Activated T-helper 1 cell treated with anti-CD3 and anti-CD28 coated beads, Interleukin-12 subunit alpha, Interleukin-12 subunit beta, Interleukin-2, Interleukin-4 antibody, amounts not matched to agents 30 ng/mL and 10 ng/mL and 1 ng/mL, durations not matched to agents 14 hours and 24 hours and 36 hours (primary cell): ENCODE measurements at regions of chr5 and their contacts with region 1.

Region 1: DNA sequence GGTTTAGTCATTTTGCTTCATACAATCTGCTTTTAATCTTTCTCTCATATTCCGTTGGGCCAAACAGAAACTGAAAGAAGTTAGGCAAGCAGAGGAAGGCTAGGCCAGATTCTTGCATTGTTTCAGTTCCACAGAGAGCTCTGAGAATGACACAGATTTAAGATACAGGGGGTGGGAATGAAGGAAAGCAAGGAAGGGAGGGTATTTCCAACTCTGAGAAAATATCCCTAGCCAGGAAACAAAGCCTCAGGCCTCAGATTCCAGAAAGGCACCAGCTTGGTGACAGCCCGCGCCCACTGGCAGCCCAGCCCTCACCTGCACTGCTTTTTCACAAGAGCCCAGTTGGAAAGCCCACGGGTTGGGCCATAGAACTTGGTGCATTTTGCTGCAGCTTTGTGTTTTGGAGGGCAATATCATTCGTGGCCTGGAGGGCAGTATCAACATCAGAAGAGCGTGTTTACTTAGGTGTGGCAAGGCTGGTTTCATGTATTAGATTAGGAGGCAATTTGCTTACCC is 63.5 kb downstream of the ENC1 start:
- DNase-seq: peak; percentile 12
- H3K4me3 Mint-ChIP-seq: peak overlapping the region; percentile 21
- H3K27ac Mint-ChIP-seq: peak overlapping the region; percentile 53
- H3K4me1 Mint-ChIP-seq: peaks cover 34% of the 10 kb centered on the region
- H3K27me3 Mint-ChIP-seq: peaks cover 12% of the 10 kb centered on the region

Region 2: GRCh38 chr5:73160239-73160671 is 1416.7 kb before region 1 on chr5:
- intact Hi-C with region 1: loop called (anchors 5 kb)
- DNase-seq: peak; percentile 38
- H3K4me3 Mint-ChIP-seq: no peak overlapping the region
- H3K27ac Mint-ChIP-seq: peak overlapping the region; percentile 64
- H3K4me1 Mint-ChIP-seq: peaks cover 24% of the 10 kb centered on the region
- H3K27me3 Mint-ChIP-seq: peaks cover 76% of the 10 kb centered on the region

Region 3: GRCh38 chr5:73902327-73903051 is 674.5 kb before region 1 on chr5:
- intact Hi-C with region 1: loop called (anchors 2 kb)
- DNase-seq: no peak
- H3K4me3 Mint-ChIP-seq: no peak overlapping the region
- H3K27ac Mint-ChIP-seq: no peak overlapping the region
- H3K4me1 Mint-ChIP-seq: peaks cover 14% of the 10 kb centered on the region
- H3K27me3 Mint-ChIP-seq: peaks cover 38% of the 10 kb centered on the region

Region 4: DNA sequence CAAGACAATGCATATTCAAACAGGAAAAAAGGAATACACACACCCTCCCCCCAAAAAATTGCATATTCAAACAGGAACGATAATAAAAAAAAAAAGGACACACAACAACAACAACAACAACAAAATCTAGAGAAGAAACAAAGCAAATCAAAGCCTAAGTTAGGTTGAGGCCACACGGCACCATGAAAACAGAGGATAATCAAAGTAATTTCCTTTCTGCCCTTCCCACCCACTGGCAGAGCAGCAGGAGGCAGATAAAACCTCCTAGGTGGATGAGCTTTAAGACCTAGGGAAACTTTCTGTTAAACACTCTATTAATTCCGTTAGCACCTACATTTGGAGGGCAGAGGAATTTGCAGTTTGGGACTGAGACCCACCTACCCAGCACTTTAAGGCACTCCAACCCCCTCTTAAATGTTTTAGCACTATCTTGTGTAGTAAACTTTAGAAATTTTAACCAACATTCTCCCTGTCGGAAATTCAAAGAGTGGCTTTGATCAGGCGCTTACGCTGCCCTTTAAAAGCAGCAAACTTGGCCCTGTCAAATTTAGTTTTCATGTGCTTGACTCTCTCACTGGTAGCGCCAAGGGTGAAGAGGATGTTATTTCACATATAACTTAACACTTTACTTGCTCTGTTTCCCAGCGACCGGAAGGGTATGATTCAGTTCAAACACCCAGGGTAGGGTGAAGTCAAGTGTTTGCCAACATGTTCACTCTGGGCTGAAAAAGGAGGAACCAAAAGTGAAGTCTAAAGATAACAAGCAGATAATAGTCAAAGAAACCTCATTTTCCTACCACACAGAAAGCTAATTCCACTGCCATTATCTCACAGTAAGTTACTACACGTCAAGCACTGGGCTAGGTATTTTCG is 54.3 kb after region 1 on chr5:
- intact Hi-C with region 1: loop called (anchors 1 kb)
- DNase-seq: peak; percentile 21
- H3K4me3 Mint-ChIP-seq: no peak overlapping the region
- H3K27ac Mint-ChIP-seq: peak overlapping the region; percentile 79
- H3K4me1 Mint-ChIP-seq: peaks cover 27% of the 10 kb centered on the region
- H3K27me3 Mint-ChIP-seq: no peaks in the 10 kb centered on the region

Region 5: GRCh38 chr5:74684900-74685851 is 108.2 kb after region 1 on chr5 and contains the start of gene HEXB:
- intact Hi-C with region 1: loop called (anchors 1 kb)
- DNase-seq: peak; percentile 83
- H3K4me3 Mint-ChIP-seq: peak within 1 kb of the TSS; percentile 90
- H3K27ac Mint-ChIP-seq: peak within 1 kb of the TSS; percentile 71
- H3K4me1 Mint-ChIP-seq: peaks cover 23% of the 10 kb centered on the region
- H3K27me3 Mint-ChIP-seq: peaks cover 14% of the 10 kb centered on the region
- total RNA-seq, gene HEXB: 62.7 and 71.4 TPM in 2 replicates

Region 6: GRCh38 chr5:75511435-75512384 is 934.7 kb after region 1 on chr5 and contains the starts of genes CERT1 and POLK:
- intact Hi-C with region 1: loop called (anchors 5 kb)
- DNase-seq: peak; percentile 96
- H3K4me3 Mint-ChIP-seq: peak within 1 kb of the TSS; percentile 99
- H3K27ac Mint-ChIP-seq: peak within 1 kb of the TSS; percentile 93
- H3K4me1 Mint-ChIP-seq: peaks cover 62% of the 10 kb centered on the region
- H3K27me3 Mint-ChIP-seq: no peaks in the 10 kb centered on the region
- total RNA-seq, gene CERT1: 41.0 and 43.4 TPM in 2 replicates
- total RNA-seq, gene POLK: 38.0 and 40.4 TPM in 2 replicates